ENCODE measurements at regions of chr11 and their contacts with region 1.

Region 1: GRCh38 chr11:88680806-88681205 is 343.3 kb upstream of the CTSC start:
- DNase-seq: no peak
- H3K4me3 ChIP-seq: no peak overlapping the region
- H3K27ac ChIP-seq: no peak overlapping the region
- H3K4me1 ChIP-seq: no peaks in the 10 kb centered on the region
- H3K27me3 ChIP-seq: no peaks in the 10 kb centered on the region
- CTCF ChIP-seq: no peak

Region 2: GRCh38 chr11:87338046-87338639 is 1342.7 kb before region 1 on chr11:
- intact Hi-C with region 1: loop called (anchors 5 kb)
- DNase-seq: no peak
- H3K4me3 ChIP-seq: no peak overlapping the region
- H3K27ac ChIP-seq: no peak overlapping the region
- H3K4me1 ChIP-seq: no peaks in the 10 kb centered on the region
- H3K27me3 ChIP-seq: no peaks in the 10 kb centered on the region
- CTCF ChIP-seq: no peak

Region 3: DNA sequence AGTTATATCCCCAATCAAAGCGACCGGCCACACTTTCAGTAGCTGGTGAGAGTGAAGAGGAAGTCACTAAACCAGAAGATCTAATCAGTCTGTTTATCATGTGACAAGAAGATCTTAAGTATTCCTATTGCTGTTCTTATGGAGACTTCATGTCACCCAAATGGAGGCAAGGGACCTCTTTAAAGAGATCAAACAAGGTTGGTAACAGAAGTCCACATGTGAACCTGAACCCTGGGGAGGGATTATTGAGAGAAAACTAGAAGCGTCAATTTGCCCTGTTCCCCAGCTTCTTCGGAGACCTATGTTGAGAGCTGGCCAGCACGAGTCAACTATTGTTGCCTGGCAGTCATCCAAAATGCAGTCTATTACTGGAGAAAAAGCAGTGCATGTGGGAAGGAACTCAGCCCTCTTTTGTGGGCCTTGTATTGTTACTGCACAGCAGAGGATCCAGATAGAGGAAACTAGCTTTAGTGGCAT is 266.4 kb before region 1 on chr11:
- intact Hi-C with region 1: no loop called
- DNase-seq: no peak
- H3K4me3 ChIP-seq: no peak overlapping the region
- H3K27ac ChIP-seq: no peak overlapping the region
- H3K4me1 ChIP-seq: no peaks in the 10 kb centered on the region
- H3K27me3 ChIP-seq: no peaks in the 10 kb centered on the region
- CTCF ChIP-seq: no peak

Region 4: GRCh38 chr11:88695689-88696414 is 15.0 kb after region 1 on chr11:
- intact Hi-C with region 1: no loop called
- DNase-seq: no peak
- H3K4me3 ChIP-seq: no peak overlapping the region
- H3K27ac ChIP-seq: no peak overlapping the region
- H3K4me1 ChIP-seq: no peaks in the 10 kb centered on the region
- H3K27me3 ChIP-seq: no peaks in the 10 kb centered on the region
- CTCF ChIP-seq: no peak

Measured in ascending aorta (tissue), 2 donors.